ENCODE measurements at regions of chrX and their contacts with region 1.

Region 1: GRCh38 chrX:132568291-132568690 is 79.5 kb upstream of the MBNL3 start:
- DNase-seq: no peak
- ATAC-seq: no peak
- H3K4me3 ChIP-seq: no peak overlapping the region
- H3K27ac ChIP-seq: no peak overlapping the region
- H3K4me1 ChIP-seq: no peaks in the 10 kb centered on the region
- H3K27me3 ChIP-seq: no peaks in the 10 kb centered on the region
- CTCF ChIP-seq: no peak

Region 2: DNA sequence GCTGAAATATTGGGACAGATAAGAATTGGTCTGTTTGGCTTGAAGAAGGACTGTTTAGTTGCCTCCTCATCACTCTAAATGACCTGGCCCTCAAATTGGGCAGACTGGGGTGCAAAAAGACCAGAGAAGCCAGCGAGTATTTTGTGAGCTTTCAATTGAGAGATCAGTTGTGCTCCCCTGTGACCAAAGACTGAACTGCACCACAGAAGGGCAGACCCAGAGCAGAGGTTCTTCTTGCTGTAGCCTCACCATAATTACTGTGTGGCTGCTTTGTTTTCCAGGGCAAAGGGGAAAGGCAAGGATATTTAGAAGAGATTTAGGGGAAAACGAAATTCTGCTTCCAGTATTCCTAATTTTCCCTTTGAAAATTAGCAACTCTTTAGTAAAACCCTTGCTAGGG is 24.6 kb after region 1 on chrX:
- CTCF ChIA-PET with region 1: no interaction called
- POLR2A ChIA-PET with region 1: no interaction called
- in situ Hi-C with region 1: no loop called
- intact Hi-C with region 1: loop called (anchors 1 kb)
- DNase-seq: no peak
- ATAC-seq: no peak
- H3K4me3 ChIP-seq: no peak overlapping the region
- H3K27ac ChIP-seq: no peak overlapping the region
- H3K4me1 ChIP-seq: no peaks in the 10 kb centered on the region
- H3K27me3 ChIP-seq: peaks cover 2% of the 10 kb centered on the region; the same call in 1 of the 2 replicates
- CTCF ChIP-seq: peak; percentile 45

Measured in Panc1 (cell line).